ENCODE measurements at regions of chr22 and their contacts with region 1.

Region 1: DNA sequence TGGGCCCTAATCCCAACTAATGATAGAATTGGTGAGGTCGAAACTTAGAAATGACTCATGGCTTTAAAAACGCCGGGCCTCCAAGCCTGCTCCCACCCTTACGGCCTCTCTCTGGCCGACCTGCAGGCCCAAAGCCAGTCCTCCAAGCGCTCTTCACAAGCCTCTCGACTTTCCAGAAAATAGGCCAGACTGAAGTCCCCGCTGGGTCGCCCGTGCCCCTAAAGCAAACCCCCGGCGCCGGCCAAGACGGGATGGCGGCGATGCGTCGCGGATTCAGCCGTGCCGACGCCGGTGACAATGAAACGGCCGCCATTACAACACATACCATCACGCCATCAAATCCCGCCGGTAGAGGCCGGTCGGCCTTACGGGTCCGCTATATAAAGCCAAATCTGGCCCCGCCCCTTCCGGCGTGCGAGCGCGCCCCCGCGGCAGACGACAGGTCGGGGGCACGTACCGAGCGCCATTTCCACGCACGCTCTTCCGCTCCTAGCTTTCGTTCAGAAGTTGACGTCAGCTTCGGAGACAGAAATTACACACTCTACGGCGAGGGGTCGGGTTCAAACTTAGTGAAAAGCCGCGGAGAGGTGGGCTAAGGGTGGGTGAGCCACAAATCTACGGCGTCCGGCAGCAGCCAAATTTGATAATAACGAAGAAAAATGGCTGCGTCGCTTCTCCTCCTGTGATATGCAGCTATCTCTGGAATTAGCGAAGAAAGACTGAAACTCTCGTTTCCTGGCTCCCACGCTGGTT is at the start of gene RPL3:
- DNase-seq: peak; percentile 99
- total RNA-seq, gene RPL3: 1,303 to 1,339 TPM

Region 2: DNA sequence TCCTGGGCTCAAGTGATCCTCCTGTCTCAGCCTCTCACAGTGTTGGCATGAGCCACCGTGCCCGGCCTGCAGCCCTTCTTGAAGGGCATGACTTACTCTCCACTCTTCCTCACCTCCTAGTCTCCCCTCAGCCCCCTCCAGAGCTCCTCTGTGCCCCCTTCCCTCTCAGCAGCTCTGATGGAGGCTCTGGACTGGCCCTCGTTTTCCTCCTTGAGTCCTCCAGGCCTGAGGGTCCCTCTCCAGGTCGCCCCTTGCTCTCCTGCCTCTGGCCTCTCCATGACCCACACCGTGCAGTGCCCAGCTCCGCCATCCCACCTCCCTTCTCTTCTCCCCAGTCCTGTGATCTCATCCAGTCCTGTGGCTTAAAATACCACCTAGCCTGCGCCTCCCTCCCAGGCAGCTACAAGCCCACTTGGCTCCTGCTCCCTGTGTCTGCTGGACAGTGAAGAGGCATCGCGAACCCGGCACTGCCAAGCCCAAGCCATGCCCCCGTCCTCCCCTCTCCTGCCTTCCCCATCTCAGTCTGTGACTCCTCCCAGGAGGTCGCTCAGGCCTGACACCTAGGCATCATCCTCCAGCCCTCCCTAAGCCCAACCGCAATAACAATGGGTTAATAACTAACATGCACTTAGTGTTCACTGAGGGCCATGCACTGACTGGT is 876.3 kb before region 1 on chr22:
- intact Hi-C with region 1: no loop called
- DNase-seq: no peak

Region 3: GRCh38 chr22:39343259-39344048 is 24.0 kb after region 1 on chr22:
- intact Hi-C with region 1: loop called in 1 of 2 experiments (anchors 1 kb)
- DNase-seq: no peak

Measured in posterior vena cava (tissue), 2 donors.